ENCODE measurements at regions of chr19 and their contacts with region 1.

Region 1: GRCh38 chr19:2475702-2476450 is at the start of gene GADD45B:
- DNase-seq: peak; percentile 97
- ATAC-seq: peak; percentile 46
- H3K4me3 Mint-ChIP-seq: peak within 1 kb of the TSS; percentile 99
- H3K27ac Mint-ChIP-seq: peak within 1 kb of the TSS; percentile 90
- H3K4me1 Mint-ChIP-seq: peaks cover 19% of the 10 kb centered on the region
- H3K27me3 Mint-ChIP-seq: no peaks in the 10 kb centered on the region
- CTCF ChIP-seq: no peak
- total RNA-seq, gene GADD45B: 98.3 to 102 TPM

Region 2: DNA sequence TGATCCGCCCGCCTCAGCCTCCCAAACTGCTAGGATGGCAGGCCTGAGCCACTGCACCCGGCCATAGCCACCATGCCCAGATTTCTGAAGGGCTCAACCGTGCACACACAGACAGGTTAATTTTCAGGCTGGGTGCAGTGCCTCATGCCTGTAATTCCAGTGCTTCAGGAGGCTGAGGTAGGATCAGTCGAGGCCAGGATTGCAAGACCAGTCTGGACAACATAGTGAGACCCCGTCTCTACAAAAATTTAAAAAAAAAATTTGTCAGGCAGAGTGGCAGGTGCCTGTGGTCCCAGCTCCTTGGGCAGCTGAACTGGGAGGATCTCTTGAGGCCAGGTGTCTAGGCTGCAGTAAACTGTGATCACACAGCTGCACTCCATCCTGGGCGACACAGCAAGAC is 56.1 kb before region 1 on chr19:
- CTCF ChIA-PET with region 1: no interaction called
- POLR2A ChIA-PET with region 1: no interaction called
- intact Hi-C with region 1: no loop called
- DNase-seq: no peak
- ATAC-seq: no peak
- H3K4me3 Mint-ChIP-seq: no peak overlapping the region
- H3K27ac Mint-ChIP-seq: no peak overlapping the region
- H3K4me1 Mint-ChIP-seq: peaks cover 2% of the 10 kb centered on the region
- H3K27me3 Mint-ChIP-seq: no peaks in the 10 kb centered on the region
- CTCF ChIP-seq: no peak

Region 3: GRCh38 chr19:2461751-2462634 is 13.9 kb before region 1 on chr19:
- CTCF ChIA-PET with region 1: interaction called, 7 read pairs
- POLR2A ChIA-PET with region 1: interaction called, 26 read pairs
- intact Hi-C with region 1: no loop called
- DNase-seq: peak; percentile 80
- ATAC-seq: peak; percentile 77
- H3K4me3 Mint-ChIP-seq: peak overlapping the region; percentile 86
- H3K27ac Mint-ChIP-seq: peak overlapping the region; percentile 80
- H3K4me1 Mint-ChIP-seq: peaks cover 14% of the 10 kb centered on the region
- H3K27me3 Mint-ChIP-seq: no peaks in the 10 kb centered on the region
- CTCF ChIP-seq: peak; percentile 18

Region 4: DNA sequence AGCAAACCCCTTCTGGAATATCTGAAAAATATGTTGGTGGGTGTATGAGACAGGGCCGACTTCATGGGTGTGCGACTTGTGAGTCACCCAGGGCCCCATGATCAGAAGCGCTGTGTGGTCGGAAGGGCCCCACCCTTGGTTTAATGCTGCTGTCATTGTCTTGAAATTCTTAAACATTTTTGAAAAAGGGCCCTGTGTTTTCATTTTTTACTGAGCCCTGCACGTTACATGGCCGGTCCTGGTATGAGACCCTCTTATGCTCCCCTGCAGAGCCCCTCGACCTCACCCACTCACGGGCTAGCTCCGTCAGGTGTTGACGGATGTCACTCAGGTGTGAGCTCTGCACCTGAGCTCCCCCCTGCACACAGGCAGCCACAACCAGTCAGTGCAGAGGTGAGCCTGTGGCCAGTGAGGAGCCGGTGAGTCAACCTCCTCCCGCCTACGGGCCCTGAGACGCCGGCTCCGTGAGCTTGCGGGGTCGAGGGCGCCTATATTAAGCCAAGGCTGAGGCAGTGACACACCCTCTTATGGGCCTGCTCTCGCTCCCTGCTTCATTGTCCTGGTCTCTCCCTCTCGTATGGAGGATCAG is 27.7 kb after region 1 on chr19:
- CTCF ChIA-PET with region 1: interaction called, 3 read pairs
- POLR2A ChIA-PET with region 1: interaction called, 46 read pairs
- intact Hi-C with region 1: loop called (anchors 1 kb)
- DNase-seq: peak; percentile 93
- ATAC-seq: peak; percentile 93
- H3K4me3 Mint-ChIP-seq: peak overlapping the region; percentile 34
- H3K27ac Mint-ChIP-seq: peak overlapping the region; percentile 85
- H3K4me1 Mint-ChIP-seq: peaks cover 27% of the 10 kb centered on the region
- H3K27me3 Mint-ChIP-seq: peaks cover 2% of the 10 kb centered on the region
- CTCF ChIP-seq: no peak

Region 5: GRCh38 chr19:2552859-2553258 is 77.0 kb after region 1 on chr19:
- CTCF ChIA-PET with region 1: interaction called, 6 read pairs
- POLR2A ChIA-PET with region 1: interaction called, 37 read pairs
- intact Hi-C with region 1: loop called (anchors 5 kb)
- DNase-seq: peak; percentile 76
- ATAC-seq: peak; percentile 87
- H3K4me3 Mint-ChIP-seq: peak overlapping the region; percentile 59
- H3K27ac Mint-ChIP-seq: peak overlapping the region; percentile 83
- H3K4me1 Mint-ChIP-seq: peaks cover 31% of the 10 kb centered on the region
- H3K27me3 Mint-ChIP-seq: no peaks in the 10 kb centered on the region
- CTCF ChIP-seq: no peak

Region 6: GRCh38 chr19:2578901-2579677 is 103.2 kb after region 1 on chr19:
- CTCF ChIA-PET with region 1: interaction called, 40 read pairs
- POLR2A ChIA-PET with region 1: interaction called, 25 read pairs
- intact Hi-C with region 1: no loop called
- DNase-seq: peak; percentile 78
- ATAC-seq: peak; percentile 61
- H3K4me3 Mint-ChIP-seq: peak overlapping the region; percentile 52
- H3K27ac Mint-ChIP-seq: no peak overlapping the region
- H3K4me1 Mint-ChIP-seq: no peaks in the 10 kb centered on the region
- H3K27me3 Mint-ChIP-seq: peaks cover 12% of the 10 kb centered on the region
- CTCF ChIP-seq: peak; percentile 79

Region 7: DNA sequence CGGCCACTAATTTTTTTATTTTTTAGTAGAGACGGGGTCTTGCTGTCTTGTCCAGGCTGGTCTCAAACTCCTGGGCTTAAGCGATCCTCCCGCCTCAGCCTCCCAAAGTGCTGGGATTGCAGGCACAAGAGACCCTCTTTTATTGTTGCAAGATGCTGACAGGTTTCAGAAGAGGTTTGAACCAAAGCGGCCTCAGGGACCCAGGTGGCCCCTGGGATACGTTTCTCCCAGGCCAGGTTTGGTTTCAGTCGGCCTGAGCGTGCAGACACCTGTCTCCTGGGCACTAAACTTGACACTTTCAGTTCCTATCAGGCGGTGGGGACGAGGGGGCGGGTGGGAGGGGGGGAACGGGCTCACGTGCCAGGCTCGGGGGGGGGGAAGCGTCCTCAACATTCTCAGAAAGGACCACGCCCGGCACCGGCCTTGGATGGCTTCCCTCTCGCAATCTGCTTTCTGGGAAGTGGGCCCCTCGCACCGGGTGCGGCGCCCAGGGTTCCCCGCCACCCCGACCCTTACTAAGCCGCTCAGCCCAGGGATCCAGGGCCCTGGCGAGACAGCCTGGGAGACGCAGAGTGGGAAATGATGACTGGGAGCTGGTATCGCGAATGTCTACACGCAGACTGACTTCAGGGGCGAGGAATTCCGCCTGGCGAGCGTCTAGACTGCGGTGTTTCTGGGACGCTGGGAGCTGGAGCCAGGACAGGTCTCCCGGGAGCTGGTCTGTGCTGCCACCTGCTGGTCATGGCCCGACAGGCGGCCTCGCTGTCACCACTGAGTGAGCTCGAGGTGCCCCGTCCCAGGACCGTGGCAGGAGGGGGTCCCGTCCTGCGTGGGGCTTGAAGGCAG is 135.0 kb after region 1 on chr19:
- CTCF ChIA-PET with region 1: interaction called, 91 read pairs
- POLR2A ChIA-PET with region 1: interaction called, 168 read pairs
- intact Hi-C with region 1: loop called (anchors 2 kb)
- DNase-seq: peak; percentile 92
- ATAC-seq: peak; percentile 43
- H3K4me3 Mint-ChIP-seq: peak overlapping the region; percentile 73
- H3K27ac Mint-ChIP-seq: peak overlapping the region; percentile 85
- H3K4me1 Mint-ChIP-seq: peaks cover 52% of the 10 kb centered on the region
- H3K27me3 Mint-ChIP-seq: peaks cover under 1% of the 10 kb centered on the region
- CTCF ChIP-seq: peak; percentile 97

Region 8: DNA sequence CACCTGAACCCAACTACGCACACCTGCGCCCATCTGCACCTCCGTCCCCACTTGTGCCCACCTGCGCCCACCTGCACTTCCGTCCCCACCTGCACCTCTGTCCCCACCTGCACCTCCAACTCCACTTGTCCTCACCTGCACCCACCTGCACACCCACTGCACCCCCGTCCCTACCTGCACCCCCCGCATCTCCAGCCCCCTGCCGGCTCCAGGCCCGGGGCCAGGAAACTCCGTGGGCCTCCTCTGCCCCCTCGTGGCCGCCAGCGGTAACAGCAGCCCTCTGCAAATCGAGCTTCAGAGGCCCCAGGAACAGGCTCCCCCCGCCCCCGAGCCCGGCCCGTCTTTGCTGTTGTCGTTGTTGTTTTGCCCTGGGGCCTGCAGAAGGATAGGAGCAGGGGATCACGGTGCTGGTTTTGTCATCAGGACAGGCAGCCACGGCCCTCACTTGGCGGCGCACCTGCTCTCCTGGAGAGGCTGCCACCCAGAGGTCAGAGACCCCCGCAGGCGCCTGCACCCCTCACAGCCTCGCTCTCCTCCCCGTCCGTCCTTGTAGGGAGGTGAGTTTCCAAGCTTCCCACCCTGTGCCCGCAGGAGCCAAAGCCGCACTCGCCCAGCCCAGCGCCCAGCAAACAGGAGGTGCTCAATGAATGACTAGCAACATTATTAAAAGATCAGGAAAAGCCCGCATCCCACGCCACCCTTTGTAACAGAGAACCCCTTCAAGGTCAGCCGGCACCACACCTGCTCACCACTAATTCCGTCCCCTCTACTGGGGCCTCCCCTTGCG is 161.2 kb after region 1 on chr19:
- CTCF ChIA-PET with region 1: interaction called, 10 read pairs
- POLR2A ChIA-PET with region 1: interaction called, 6 read pairs
- intact Hi-C with region 1: no loop called
- DNase-seq: peak; percentile 83
- ATAC-seq: peak; percentile 97
- H3K4me3 Mint-ChIP-seq: no peak overlapping the region
- H3K27ac Mint-ChIP-seq: no peak overlapping the region
- H3K4me1 Mint-ChIP-seq: peaks cover 14% of the 10 kb centered on the region
- H3K27me3 Mint-ChIP-seq: peaks cover 3% of the 10 kb centered on the region
- CTCF ChIP-seq: peak; percentile 78